Activated T-helper 1 cell treated with anti-CD3 and anti-CD28 coated beads, Interleukin-12 subunit alpha, Interleukin-12 subunit beta, Interleukin-2, Interleukin-4 antibody, amounts not matched to agents 30 ng/mL and 10 ng/mL and 1 ng/mL, durations not matched to agents 14 hours and 24 hours and 36 hours (primary cell): ENCODE measurements at regions of chr11 and their contacts with region 1.

Region 1: DNA sequence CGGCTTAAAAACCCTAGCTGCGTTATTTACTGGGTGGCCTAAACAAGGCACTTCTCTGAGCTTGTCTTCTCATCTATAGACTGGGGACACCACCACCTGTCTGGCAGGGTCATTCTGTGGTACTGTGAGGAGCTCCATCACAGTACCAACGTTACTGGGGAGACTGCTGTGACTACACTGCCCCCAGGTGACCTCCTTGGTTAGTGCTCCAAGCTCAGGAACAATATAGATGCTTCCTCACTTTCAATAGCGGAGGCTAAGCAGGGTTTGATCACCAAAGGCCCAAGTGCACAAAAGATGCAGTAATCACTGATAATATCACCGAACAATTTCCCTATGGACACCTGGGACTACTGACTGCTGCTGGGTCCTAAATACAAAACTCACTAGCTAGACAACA is 18.8 kb downstream of the PRPF19 start:
- DNase-seq: no peak
- H3K4me3 Mint-ChIP-seq: no peak overlapping the region
- H3K27ac Mint-ChIP-seq: no peak overlapping the region
- H3K4me1 Mint-ChIP-seq: peaks cover 12% of the 10 kb centered on the region
- H3K27me3 Mint-ChIP-seq: no peaks in the 10 kb centered on the region

Region 2: GRCh38 chr11:60775420-60775961 is 112.1 kb before region 1 on chr11:
- intact Hi-C with region 1: loop called (anchors 1 kb)
- DNase-seq: peak; percentile 69
- H3K4me3 Mint-ChIP-seq: no peak overlapping the region
- H3K27ac Mint-ChIP-seq: no peak overlapping the region
- H3K4me1 Mint-ChIP-seq: peaks cover 5% of the 10 kb centered on the region
- H3K27me3 Mint-ChIP-seq: peaks cover 8% of the 10 kb centered on the region

Region 3: DNA sequence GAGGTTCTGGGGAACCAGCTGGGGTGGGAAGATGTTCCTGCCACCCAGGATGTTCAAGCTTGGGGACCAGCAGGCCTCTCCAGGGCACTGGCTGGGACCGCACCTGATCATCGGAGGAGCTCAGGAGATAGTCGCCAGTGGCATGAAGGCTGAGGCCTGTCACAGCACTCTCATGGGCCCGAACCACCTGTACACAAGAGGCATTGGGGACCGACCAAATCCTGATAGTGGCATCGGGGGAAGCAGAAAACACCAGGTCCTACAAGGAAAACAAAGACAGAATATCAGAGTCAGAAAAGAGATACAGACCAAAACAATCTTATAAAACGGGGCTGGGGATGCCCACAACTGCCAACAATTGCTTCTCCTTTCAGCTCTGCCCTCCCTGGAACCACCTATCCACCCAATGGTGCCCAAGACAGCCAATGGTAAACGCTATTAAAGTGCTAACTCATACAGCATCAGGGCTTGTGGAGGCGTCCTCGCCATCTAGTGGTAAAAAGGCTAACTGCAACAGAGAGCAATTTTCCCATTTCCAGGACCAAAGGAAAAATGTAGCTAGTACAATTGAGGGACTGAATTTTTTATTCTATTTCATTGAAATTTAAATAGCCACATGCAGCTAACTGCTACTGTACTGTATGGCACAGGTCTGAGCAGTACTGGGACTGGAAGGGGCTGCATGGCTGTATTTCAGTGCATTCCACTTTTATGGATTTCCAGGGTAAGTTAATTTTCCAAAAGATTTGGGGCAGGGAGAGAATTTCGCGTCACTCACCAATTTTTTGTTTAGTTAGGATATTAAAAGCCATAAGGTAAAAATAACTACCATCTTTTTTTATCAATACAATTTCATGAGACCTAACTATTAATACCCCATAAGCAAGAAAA is 11.7 kb after region 1 on chr11:
- intact Hi-C with region 1: no loop called
- DNase-seq: no peak
- H3K4me3 Mint-ChIP-seq: no peak overlapping the region
- H3K27ac Mint-ChIP-seq: peak overlapping the region; percentile 12
- H3K4me1 Mint-ChIP-seq: peaks cover 10% of the 10 kb centered on the region
- H3K27me3 Mint-ChIP-seq: no peaks in the 10 kb centered on the region